Activated CD4-positive, alpha-beta T cell treated with anti-CD3 and anti-CD28 coated beads for 36 hours (primary cell): ENCODE measurements at regions of chrX and their contacts with region 1.

Region 1: DNA sequence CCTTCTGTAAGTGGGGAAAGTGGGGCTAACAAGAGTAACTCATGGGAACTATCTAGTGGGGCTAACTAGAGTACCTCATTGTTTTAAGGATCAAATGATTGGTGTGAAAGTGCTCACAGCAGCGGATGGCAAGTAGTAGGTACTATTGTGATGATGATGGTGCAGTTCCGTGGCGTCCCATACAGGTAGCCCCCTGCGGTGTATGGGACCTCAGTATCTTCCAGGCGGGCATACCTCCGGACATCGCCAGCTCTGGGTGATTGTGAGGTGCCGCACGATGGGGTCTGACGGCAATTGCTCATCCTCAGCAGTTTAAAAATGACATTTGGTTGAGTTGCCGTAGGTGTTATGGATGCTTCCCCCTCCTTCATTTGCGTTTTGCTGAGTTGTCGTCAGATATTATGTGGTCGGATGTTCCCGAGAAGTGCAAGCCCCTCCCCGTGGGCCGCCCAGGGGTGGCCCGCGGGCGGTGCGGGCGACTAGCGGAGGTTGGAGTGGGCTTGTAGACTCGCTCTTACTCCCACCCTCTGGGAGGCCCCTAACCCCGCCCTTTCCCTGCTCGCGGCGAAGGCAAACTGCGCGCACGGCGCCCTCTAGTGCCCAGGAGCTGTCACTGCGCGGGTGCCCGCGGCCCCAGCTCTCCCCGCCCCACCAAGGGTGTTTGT is 18.3 kb upstream of the GPR101 start:
- DNase-seq: peak; percentile 87
- ATAC-seq: peak; percentile 89
- H3K4me3 Mint-ChIP-seq: peak overlapping the region; percentile 74
- H3K27ac Mint-ChIP-seq: peak overlapping the region; percentile 76
- H3K4me1 Mint-ChIP-seq: peaks cover 12% of the 10 kb centered on the region
- H3K27me3 Mint-ChIP-seq: peaks cover 19% of the 10 kb centered on the region

Region 2: DNA sequence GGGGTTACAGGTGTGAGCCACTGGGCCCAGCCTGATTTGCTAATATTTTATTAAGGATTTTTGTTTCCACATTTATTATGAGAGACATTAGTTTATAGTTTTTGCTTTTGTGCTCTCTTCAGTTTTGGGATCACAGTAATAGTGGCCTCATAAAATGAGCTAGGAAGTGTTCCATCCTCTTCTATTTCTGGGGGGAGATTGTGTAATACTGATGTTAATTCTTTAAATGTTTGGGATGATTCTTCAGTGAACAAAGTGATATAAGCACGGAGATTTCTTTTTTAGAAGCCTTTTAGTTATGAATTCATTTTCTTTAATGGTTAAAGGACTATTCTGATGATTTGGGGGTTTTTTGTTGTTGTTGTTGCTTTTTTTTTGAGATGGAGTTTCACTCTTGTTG is 212.9 kb before region 1 on chrX:
- CTCF ChIA-PET with region 1: no interaction called
- POLR2A ChIA-PET with region 1: no interaction called
- intact Hi-C with region 1: loop called in 1 of 2 experiments (anchors 10 kb)
- DNase-seq: no peak
- ATAC-seq: no peak
- H3K4me3 Mint-ChIP-seq: no peak overlapping the region
- H3K27ac Mint-ChIP-seq: no peak overlapping the region
- H3K4me1 Mint-ChIP-seq: no peaks in the 10 kb centered on the region
- H3K27me3 Mint-ChIP-seq: no peaks in the 10 kb centered on the region

Region 3: DNA sequence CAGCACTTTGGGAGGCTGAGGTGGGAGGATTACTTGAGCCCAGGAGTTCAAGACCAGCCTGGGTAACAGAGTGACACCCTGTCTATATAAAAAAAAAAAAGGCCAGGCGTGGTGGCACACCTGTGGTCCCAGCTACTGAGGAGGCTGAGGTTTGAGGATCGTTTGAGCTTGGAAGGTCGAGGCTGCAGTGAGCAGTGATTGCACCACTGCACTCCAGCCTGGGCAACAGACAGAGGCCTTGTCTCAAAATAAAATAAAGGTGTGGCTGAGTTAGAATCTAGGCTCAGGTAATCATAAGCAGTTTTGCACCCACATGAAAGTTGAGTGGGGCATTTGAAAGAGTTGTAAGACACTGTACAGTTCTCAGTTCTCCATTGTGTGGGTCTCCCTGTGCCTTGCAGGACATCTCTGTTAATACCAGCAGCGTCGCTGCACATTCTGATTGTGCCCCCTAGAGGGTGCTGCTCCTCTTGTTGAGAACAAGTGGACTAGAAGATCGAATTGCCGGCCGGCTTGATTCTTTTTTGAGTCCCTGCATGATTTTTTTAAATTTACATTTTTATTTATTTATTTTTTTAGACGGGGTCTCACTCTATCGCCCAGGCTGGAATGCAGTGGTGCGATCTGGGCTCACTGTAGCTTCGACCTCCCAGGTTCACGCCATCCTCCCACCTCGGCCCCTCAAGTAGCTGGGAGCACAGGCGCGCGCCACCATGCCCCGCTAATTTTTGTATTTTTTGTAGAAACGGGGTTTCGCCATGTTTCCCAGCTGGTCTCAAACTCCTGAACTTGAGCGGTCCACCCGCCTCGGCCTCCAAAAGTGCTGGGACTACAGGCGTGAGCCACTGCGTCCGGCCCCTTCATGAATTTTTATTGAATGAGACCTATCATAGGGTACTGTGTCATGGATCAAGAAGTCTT is 98.0 kb before region 1 on chrX:
- CTCF ChIA-PET with region 1: interaction called, 10 read pairs
- POLR2A ChIA-PET with region 1: no interaction called
- intact Hi-C with region 1: loop called (anchors 1 kb)
- DNase-seq: peak; percentile 78
- ATAC-seq: peak; percentile 76
- H3K4me3 Mint-ChIP-seq: no peak overlapping the region
- H3K27ac Mint-ChIP-seq: no peak overlapping the region
- H3K4me1 Mint-ChIP-seq: no peaks in the 10 kb centered on the region
- H3K27me3 Mint-ChIP-seq: no peaks in the 10 kb centered on the region

Region 4: DNA sequence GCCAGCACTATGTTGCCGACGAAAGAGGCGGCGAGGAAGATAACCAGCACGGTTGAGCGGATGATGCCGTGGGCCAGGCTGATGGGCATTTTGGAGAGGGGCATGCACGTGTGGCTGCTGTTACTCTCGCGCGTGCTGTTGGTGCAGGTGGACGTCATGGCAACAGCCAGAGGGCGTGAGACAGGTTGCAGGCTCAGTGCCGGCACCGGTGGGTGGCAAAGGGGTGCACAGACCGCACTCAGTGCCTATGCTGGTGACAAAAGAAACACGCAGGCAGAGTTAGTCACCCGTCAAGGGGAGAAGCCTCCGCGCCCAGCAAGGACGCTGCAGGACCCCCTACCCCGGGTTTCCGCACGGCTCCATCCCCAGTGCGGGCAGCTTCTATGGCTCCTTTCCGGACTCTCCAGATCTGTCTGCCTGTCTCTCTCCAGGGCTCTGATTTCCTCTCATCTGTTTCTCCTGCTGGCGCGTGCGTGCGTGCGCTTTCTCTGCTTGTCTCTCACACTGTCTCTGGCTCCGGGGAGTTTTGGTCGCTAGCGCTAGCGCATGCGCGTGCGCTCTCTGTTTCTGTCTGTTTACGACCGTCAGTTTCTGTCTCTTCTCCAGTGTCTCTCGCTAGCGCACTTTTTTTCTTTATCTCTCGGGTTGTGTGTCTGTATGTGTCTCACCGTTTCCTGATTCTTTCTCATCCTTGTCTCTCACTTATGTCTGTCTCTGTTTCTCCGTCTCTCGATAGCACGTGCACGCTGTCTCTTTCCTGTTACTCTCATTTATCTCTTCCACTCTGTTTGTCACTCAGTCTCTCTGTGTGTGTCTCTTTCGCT is 20.4 kb before region 1 on chrX:
- CTCF ChIA-PET with region 1: interaction called, 6 read pairs
- POLR2A ChIA-PET with region 1: no interaction called
- intact Hi-C with region 1: loop called (anchors 1 kb)
- DNase-seq: peak; percentile 73
- ATAC-seq: peak; percentile 85
- H3K4me3 Mint-ChIP-seq: no peak overlapping the region
- H3K27ac Mint-ChIP-seq: no peak overlapping the region
- H3K4me1 Mint-ChIP-seq: peaks cover 7% of the 10 kb centered on the region
- H3K27me3 Mint-ChIP-seq: peaks cover 39% of the 10 kb centered on the region

Region 5: DNA sequence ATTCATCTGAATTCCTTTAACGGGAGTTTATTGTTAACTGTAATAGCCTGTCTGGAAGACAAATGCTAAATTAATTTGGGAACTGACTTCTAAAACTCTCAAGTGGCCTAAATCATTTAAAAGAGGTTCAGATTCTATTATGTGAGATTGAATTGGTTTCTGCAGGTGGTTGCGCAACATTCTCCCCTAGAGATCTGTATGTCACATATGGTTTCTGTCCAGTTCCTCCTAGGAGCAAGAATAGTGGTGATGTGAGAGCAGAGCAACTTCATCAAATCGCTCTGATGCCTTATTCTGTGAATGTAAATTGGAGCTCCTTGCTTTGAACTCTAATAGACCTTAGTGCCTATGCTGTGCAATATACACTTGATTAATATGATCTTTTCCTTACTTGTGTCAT is 126.3 kb after region 1 on chrX:
- CTCF ChIA-PET with region 1: no interaction called
- POLR2A ChIA-PET with region 1: no interaction called
- intact Hi-C with region 1: no loop called
- DNase-seq: no peak
- ATAC-seq: no peak
- H3K4me3 Mint-ChIP-seq: no peak overlapping the region
- H3K27ac Mint-ChIP-seq: no peak overlapping the region
- H3K4me1 Mint-ChIP-seq: no peaks in the 10 kb centered on the region
- H3K27me3 Mint-ChIP-seq: peaks cover 8% of the 10 kb centered on the region

Region 6: DNA sequence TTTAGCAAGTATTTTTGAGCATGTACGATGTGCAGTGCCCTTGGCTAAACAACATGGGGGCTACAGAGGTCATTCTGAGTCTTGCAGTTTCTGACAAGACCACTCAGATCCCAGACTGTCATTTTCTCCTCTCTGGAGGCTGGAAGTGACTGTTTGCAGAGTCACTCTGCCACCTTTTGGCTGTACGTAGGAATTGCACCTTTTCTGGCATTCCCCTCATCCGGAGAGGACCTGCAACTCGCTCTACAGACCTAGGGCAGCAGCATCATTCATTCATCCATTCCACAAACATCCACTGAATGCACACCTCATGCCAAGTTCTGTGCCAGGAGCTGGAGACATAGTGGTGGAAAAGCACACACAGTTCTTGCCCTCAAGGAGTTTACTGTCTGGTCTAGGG is 142.1 kb after region 1 on chrX:
- CTCF ChIA-PET with region 1: interaction called, 4 read pairs
- POLR2A ChIA-PET with region 1: no interaction called
- intact Hi-C with region 1: loop called in 1 of 2 experiments (anchors 5 kb)
- DNase-seq: peak; percentile 55
- ATAC-seq: peak; percentile 64
- H3K4me3 Mint-ChIP-seq: no peak overlapping the region
- H3K27ac Mint-ChIP-seq: no peak overlapping the region
- H3K4me1 Mint-ChIP-seq: peaks cover 7% of the 10 kb centered on the region
- H3K27me3 Mint-ChIP-seq: peaks cover 2% of the 10 kb centered on the region

Region 7: DNA sequence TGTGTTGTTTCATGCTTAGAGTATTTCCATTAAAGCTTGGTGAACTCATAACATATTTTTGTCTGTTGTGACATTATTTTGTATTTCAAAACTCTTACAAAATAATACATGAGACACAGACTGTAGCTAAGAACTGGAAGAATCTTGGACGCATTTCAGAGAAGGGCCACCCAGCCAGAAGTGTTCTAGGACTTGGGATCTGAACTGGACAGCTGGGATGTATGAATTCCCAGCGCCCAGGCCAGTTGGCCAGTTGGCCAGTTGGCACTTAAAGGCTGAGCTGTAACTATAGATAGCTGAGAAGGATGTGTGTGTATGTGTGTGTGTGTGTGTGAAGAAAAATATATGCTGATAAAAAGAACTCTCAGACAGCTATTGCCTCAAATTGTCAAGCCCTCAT is 175.0 kb after region 1 on chrX:
- CTCF ChIA-PET with region 1: no interaction called
- POLR2A ChIA-PET with region 1: no interaction called
- intact Hi-C with region 1: no loop called
- DNase-seq: no peak
- ATAC-seq: no peak
- H3K4me3 Mint-ChIP-seq: no peak overlapping the region
- H3K27ac Mint-ChIP-seq: no peak overlapping the region
- H3K4me1 Mint-ChIP-seq: no peaks in the 10 kb centered on the region
- H3K27me3 Mint-ChIP-seq: no peaks in the 10 kb centered on the region